ENCODE measurements at regions of chr22 and their contacts with region 1.

Region 1: GRCh38 chr22:17797721-17798559 is 23.7 kb upstream of the BID start:
- DNase-seq: peak; percentile 90
- ATAC-seq: peak; percentile 58
- H3K4me3 ChIP-seq: no peak overlapping the region
- H3K4me3 Mint-ChIP-seq: peak overlapping the region; percentile 73
- H3K27ac ChIP-seq: peak overlapping the region; percentile 63 to 76
- H3K27ac Mint-ChIP-seq: peak overlapping the region; percentile 93
- H3K4me1 ChIP-seq: peaks cover 56 to 73% of the 10 kb centered on the region in 2 donors
- H3K4me1 Mint-ChIP-seq: peaks cover 72% of the 10 kb centered on the region
- H3K27me3 ChIP-seq: no peaks in the 10 kb centered on the region
- H3K27me3 Mint-ChIP-seq: no peaks in the 10 kb centered on the region
- CTCF ChIP-seq: no peak

Region 2: DNA sequence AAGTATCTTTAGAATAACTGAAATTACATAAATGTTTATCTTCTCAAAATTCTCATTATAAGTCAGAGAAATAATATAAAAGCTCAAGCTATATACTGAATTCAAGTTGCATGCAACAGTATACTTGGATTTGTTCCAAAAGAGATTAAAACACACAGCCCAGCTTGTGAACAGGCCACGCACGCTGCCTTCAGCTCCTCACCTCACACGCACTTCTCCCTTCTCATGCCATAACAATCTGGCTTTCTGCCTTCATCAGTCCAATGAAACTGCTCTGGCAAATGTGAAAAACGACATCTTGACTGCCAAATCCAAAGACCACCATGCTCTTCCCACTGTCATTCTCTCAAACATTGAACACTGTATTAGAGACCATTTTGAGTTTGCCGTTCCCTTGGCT is 191.4 kb before region 1 on chr22:
- CTCF ChIA-PET with region 1: no interaction called
- POLR2A ChIA-PET with region 1: no interaction called
- intact Hi-C with region 1: no loop called
- DNase-seq: no peak
- ATAC-seq: no peak
- H3K4me3 ChIP-seq: no peak overlapping the region
- H3K4me3 Mint-ChIP-seq: no peak overlapping the region
- H3K27ac ChIP-seq: no peak overlapping the region
- H3K27ac Mint-ChIP-seq: no peak overlapping the region
- H3K4me1 ChIP-seq: no peaks in the 10 kb centered on the region
- H3K4me1 Mint-ChIP-seq: peaks cover 1% of the 10 kb centered on the region
- H3K27me3 ChIP-seq: no peaks in the 10 kb centered on the region
- H3K27me3 Mint-ChIP-seq: no peaks in the 10 kb centered on the region
- CTCF ChIP-seq: no peak

Region 3: GRCh38 chr22:17742527-17742902 is 55.4 kb before region 1 on chr22:
- CTCF ChIA-PET with region 1: interaction called, 25 read pairs
- POLR2A ChIA-PET with region 1: interaction called, 5 read pairs
- intact Hi-C with region 1: loop called (anchors 1 kb)
- DNase-seq: peak; percentile 85
- ATAC-seq: peak; percentile 94
- H3K4me3 ChIP-seq: no peak overlapping the region
- H3K4me3 Mint-ChIP-seq: no peak overlapping the region
- H3K27ac ChIP-seq: no peak overlapping the region
- H3K27ac Mint-ChIP-seq: peak overlapping the region; percentile 26
- H3K4me1 ChIP-seq: peaks cover 0 to 6% of the 10 kb centered on the region in 2 donors
- H3K4me1 Mint-ChIP-seq: peaks cover 8% of the 10 kb centered on the region
- H3K27me3 ChIP-seq: no peaks in the 10 kb centered on the region
- H3K27me3 Mint-ChIP-seq: no peaks in the 10 kb centered on the region
- CTCF ChIP-seq: peak; percentile 75

Region 4: DNA sequence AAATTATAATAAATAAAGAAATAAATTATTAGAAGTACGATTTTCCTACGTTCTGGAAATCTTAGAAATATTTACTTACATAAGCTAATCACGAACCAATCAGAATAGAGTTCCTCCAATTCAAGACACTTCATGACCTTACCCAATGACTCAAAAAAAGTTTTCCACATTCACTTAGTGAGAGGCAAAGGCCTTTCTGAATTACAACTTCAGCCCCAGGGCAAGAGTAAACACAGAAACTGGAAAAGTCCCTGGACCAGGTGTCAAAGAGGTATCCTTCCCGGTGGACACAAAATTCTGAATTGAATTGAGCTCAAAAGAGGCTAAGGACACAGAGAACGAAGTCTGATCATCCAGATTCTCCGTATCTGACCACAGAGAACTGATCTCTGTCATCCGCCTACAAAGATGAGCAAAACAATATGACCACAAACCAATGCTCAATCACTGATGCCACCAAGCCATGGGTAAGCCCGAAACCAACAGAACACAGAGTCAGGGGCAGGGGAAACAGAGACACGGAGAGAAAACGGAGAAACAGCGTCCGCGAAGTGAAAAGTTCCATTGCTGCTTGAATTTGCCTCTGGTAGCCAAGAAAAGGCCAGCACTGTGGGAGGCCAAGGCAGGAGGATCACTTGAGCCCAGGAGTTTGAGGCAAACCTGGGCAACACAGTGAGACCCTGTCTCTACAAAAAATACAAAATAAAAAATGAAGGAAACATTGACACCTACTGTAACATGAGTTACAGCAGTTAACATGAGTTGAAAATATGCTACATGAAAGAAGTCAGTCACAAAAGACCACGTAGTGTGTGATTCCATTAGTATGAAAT is 30.5 kb before region 1 on chr22:
- CTCF ChIA-PET with region 1: interaction called, 12 read pairs
- POLR2A ChIA-PET with region 1: no interaction called
- intact Hi-C with region 1: loop called (anchors 5 kb)
- DNase-seq: no peak
- ATAC-seq: peak; percentile 28
- H3K4me3 ChIP-seq: no peak overlapping the region
- H3K4me3 Mint-ChIP-seq: peak overlapping the region; percentile 55
- H3K27ac ChIP-seq: no peak overlapping the region
- H3K27ac Mint-ChIP-seq: peak overlapping the region; percentile 75
- H3K4me1 ChIP-seq: peaks cover 33 to 47% of the 10 kb centered on the region in 2 donors
- H3K4me1 Mint-ChIP-seq: peaks cover 47% of the 10 kb centered on the region
- H3K27me3 ChIP-seq: no peaks in the 10 kb centered on the region
- H3K27me3 Mint-ChIP-seq: no peaks in the 10 kb centered on the region
- CTCF ChIP-seq: no peak

Region 5: DNA sequence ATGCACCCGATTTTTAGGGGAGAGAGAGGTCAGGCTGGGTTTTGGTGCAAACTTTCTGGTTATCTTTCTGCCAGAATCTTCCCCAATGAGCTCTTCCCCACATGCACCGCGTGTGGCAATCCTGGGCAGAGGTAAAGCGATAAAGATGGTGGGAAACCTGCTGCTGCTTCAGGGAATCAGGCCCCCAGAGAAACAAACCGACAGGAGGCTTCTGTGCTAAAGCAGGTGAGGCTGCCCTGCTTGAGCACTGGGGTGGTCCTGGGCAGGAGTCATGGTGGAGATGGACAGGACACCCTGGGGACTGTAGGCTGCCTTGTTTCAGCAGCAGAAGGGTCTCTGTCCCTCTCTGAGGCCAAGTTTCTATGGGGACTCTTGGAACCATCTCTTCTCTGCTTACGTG is 252.6 kb after region 1 on chr22:
- CTCF ChIA-PET with region 1: no interaction called
- POLR2A ChIA-PET with region 1: interaction called, 13 read pairs
- intact Hi-C with region 1: no loop called
- DNase-seq: no peak
- ATAC-seq: no peak
- H3K4me3 ChIP-seq: no peak overlapping the region
- H3K4me3 Mint-ChIP-seq: no peak overlapping the region
- H3K27ac ChIP-seq: no peak overlapping the region
- H3K27ac Mint-ChIP-seq: no peak overlapping the region
- H3K4me1 ChIP-seq: peaks cover 1 to 5% of the 10 kb centered on the region in 2 donors
- H3K4me1 Mint-ChIP-seq: peaks cover 6% of the 10 kb centered on the region
- H3K27me3 ChIP-seq: no peaks in the 10 kb centered on the region
- H3K27me3 Mint-ChIP-seq: no peaks in the 10 kb centered on the region
- CTCF ChIP-seq: no peak

Measured in B cell (primary cell).